Activated CD4-positive, alpha-beta T cell treated with anti-CD3 and anti-CD28 coated beads, Interleukin-2, amount 10 ng/mL, durations not matched to agents 7 days and 5 days (primary cell): ENCODE measurements at regions of chr18 and their contacts with region 1.

Region 1: DNA sequence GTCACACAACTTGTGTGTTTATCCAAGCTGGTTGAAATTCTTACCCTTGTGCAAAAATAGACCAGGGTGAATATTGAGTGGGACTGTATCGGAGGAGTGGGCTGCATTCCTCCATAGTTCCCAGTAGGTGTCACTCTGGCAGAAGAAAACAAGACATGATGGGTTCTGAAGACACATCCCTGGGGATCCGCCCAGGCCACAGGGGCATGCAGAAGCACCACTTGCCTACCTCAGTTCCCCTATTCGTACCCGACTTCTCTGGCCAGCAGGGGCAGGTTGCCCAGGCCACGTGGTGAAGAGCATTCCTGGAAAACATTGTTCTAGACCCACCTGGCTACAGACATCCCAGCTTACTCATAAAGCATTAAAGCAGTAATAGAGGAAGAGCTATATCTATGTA is 168.2 kb downstream of the FAM210A start:
- DNase-seq: peak; percentile 40
- H3K4me3 Mint-ChIP-seq: no peak overlapping the region
- H3K27ac Mint-ChIP-seq: no peak overlapping the region
- H3K4me1 Mint-ChIP-seq: peaks cover 29% of the 10 kb centered on the region
- H3K27me3 Mint-ChIP-seq: no peaks in the 10 kb centered on the region

Region 2: DNA sequence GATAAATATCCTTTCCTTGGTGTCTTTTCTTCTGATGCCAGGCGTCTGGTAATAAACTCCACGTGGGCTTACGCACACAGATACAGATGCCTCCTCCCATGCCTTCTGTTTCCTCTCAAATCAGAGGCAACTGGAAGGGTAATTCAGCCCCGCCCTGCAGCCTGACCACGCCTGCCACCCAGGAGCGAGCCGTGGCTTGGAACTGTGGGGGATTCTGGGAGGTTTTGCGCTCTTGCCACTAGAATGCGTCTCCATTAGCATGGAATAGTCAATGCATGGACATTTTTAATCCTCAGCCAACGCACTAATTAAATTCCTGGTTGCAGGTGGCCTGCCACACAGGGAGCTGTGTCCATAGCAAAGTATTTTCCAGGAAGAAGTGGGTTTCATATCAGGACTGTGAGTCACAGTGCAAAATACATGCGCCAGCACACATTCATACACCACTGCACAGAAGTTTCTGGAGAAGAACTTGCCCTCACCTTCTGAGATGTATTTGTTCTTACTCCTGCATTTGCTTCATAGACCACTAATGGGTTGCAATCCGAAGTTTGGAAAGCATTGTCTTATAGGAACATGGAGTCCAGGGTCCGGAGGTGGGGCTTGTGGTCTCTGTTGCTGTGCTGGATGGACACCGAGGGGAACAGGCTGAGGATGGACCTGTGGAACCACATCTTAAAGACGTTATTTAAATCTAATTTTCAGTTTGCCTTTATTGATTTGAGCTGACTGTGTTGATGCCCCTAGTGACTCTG is 188.2 kb before region 1 on chr18:
- CTCF ChIA-PET with region 1: no interaction called
- POLR2A ChIA-PET with region 1: no interaction called
- DNase-seq: no peak
- H3K4me3 Mint-ChIP-seq: no peak overlapping the region
- H3K27ac Mint-ChIP-seq: no peak overlapping the region
- H3K4me1 Mint-ChIP-seq: peaks cover 51% of the 10 kb centered on the region
- H3K27me3 Mint-ChIP-seq: no peaks in the 10 kb centered on the region

Region 3: DNA sequence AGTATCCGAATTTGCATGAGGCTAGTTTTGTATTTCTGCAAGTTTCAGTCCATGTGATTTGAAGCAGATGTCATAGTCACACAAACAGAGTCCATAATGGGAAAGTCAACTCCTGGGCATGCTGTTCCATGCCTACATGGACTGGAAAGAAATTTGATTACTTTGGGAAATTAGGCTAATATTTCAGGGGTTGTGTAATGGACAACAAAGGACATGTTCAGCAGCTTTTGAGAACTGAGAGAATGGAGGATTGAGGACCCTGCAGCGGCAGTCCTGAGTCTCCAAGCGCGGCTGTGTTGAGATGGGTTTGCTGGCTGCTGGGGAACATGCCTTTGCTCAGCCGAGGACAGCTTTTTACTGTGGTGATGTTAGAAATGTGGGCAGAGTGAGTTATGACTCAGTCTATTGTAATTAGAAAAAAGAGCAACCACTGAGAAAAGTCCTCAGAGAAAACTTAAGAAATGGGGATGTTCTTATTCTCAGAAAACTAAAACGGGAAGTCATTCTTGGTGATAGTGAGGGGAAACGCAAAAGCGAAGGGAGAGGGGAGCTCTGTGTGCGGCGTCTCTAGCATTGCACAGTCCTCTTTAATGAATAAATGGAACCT is 19.1 kb after region 1 on chr18:
- CTCF ChIA-PET with region 1: interaction called, 27 read pairs
- POLR2A ChIA-PET with region 1: no interaction called
- DNase-seq: peak; percentile 50
- H3K4me3 Mint-ChIP-seq: peak overlapping the region; percentile 50
- H3K27ac Mint-ChIP-seq: peak overlapping the region; percentile 81
- H3K4me1 Mint-ChIP-seq: peaks cover 61% of the 10 kb centered on the region
- H3K27me3 Mint-ChIP-seq: no peaks in the 10 kb centered on the region

Region 4: DNA sequence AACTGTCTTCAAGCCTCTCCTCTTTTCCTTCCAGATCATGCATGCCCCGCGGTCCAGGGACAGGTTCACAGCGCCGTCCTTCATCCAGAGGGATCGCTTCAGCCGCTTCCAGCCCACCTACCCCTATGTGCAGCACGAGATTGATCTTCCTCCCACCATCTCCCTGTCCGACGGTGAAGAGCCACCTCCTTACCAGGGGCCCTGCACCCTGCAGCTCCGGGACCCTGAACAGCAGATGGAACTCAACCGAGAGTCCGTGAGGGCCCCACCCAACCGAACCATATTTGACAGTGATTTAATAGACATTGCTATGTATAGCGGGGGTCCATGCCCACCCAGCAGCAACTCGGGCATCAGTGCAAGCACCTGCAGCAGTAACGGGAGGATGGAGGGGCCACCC is 87.0 kb after region 1 on chr18:
- CTCF ChIA-PET with region 1: no interaction called
- POLR2A ChIA-PET with region 1: interaction called, 10 read pairs
- DNase-seq: no peak
- H3K4me3 Mint-ChIP-seq: no peak overlapping the region
- H3K27ac Mint-ChIP-seq: no peak overlapping the region
- H3K4me1 Mint-ChIP-seq: no peaks in the 10 kb centered on the region
- H3K27me3 Mint-ChIP-seq: no peaks in the 10 kb centered on the region

Region 5: DNA sequence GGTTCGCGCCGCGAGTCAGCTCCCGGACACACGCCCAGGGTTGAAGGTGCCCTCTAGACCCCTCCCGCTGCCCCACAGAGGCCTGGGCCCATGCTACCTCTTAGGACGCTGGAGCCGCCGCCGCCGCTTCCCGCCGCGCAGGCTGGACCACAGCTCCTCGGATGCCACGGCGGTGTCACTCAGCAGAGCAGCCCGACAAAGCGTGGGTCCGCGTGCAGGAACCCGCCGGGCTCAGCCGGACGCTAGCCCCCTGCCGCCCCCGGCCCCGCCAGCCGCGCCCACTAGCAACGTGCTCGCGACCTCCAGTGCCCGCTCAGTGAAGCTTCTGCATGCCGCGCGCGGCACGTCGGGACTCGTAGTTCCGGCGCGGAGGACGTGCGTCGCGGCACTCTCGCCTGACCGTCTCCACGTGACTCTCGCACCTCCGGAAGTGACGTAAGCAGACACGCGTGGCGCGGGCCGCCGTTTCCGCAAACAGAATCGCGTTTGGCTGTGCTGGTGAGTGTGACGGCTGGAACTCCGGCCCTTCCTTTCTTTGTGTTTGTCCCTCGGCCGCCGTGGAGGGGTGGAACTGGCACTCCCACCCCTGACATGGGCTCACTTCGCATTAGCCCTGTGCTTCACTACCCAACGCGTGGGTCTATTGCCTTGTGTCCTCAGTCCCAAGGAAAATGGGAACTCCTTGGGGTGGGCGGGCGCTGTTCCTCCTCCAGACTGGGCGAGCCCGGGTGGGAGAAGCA is 168.3 kb after region 1 on chr18 and contains the starts of genes FAM210A and RNMT:
- CTCF ChIA-PET with region 1: no interaction called
- POLR2A ChIA-PET with region 1: no interaction called
- DNase-seq: peak; percentile 96
- H3K4me3 Mint-ChIP-seq: peak within 1 kb of the TSS; percentile 94
- H3K27ac Mint-ChIP-seq: peak within 1 kb of the TSS; percentile 97
- H3K4me1 Mint-ChIP-seq: peaks cover 58% of the 10 kb centered on the region
- H3K27me3 Mint-ChIP-seq: no peaks in the 10 kb centered on the region
- total RNA-seq, gene FAM210A: 19.5 to 19.6 TPM
- total RNA-seq, gene RNMT: 34.0 to 35.3 TPM